ENCODE measurements at regions of chr13 and their contacts with region 1.

Region 1: GRCh38 chr13:72864142-72865011 is 82.4 kb downstream of the PIBF1 start:
- DNase-seq: no peak
- ATAC-seq: no peak
- H3K4me3 ChIP-seq: no peak overlapping the region
- H3K27ac ChIP-seq: peak overlapping the region in 1 of 2 donors; percentile 28
- H3K4me1 ChIP-seq: no peaks in the 10 kb centered on the region
- H3K27me3 ChIP-seq: no peaks in the 10 kb centered on the region

Region 2: DNA sequence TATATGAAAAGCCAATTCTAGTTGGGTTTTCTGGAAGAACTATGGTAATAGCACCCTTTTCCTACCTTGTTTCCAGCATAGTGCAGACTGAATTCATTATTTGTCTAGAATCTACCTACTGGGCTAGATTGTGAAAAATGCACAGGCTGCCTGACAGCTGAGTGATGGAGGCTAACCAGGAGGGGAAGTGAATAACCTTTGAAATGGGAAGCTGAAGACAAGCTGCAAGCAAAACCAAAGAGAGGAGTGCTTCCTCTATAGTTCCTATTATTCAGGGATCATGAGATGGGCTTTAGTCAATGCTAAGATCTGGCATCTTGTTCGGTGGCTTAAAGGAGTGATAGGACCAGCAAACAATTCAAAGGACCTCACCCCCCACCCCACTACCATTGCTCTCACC is 163.9 kb before region 1 on chr13:
- intact Hi-C with region 1: no loop called
- DNase-seq: no peak
- ATAC-seq: no peak
- H3K4me3 ChIP-seq: no peak overlapping the region
- H3K27ac ChIP-seq: no peak overlapping the region
- H3K4me1 ChIP-seq: no peaks in the 10 kb centered on the region
- H3K27me3 ChIP-seq: no peaks in the 10 kb centered on the region

Region 3: GRCh38 chr13:72911981-72912380 is 47.6 kb after region 1 on chr13:
- intact Hi-C with region 1: loop called in 1 of 2 experiments (anchors 10 kb)
- DNase-seq: no peak
- ATAC-seq: no peak
- H3K4me3 ChIP-seq: no peak overlapping the region
- H3K27ac ChIP-seq: no peak overlapping the region
- H3K4me1 ChIP-seq: no peaks in the 10 kb centered on the region
- H3K27me3 ChIP-seq: no peaks in the 10 kb centered on the region

Measured in aorta (tissue), 5 donors.